GM12878 (cell line): ENCODE measurements at regions of chr5 and their contacts with region 1.

Region 1: GRCh38 chr5:95822542-95823181 is at the start of gene GLRX:
- DNase-seq: no peak
- ATAC-seq: peak; percentile 66
- H3K4me3 ChIP-seq: peak within 1 kb of the TSS; percentile 87
- H3K27ac ChIP-seq: peak within 1 kb of the TSS; percentile 86
- H3K4me1 ChIP-seq: peaks cover 26% of the 10 kb centered on the region
- H3K27me3 ChIP-seq: no peaks in the 10 kb centered on the region
- CTCF ChIP-seq: no peak
- EP300 ChIP-seq: 0 out of 4 replicates have a peak, but pooled peaks of 1 of the 2 experiments have one; percentile 33
- POLR2A ChIP-seq: peak; percentile 69
- RAD21 ChIP-seq: no peak
- polyA plus RNA-seq, gene GLRX: 311 to 366 TPM

Region 2: DNA sequence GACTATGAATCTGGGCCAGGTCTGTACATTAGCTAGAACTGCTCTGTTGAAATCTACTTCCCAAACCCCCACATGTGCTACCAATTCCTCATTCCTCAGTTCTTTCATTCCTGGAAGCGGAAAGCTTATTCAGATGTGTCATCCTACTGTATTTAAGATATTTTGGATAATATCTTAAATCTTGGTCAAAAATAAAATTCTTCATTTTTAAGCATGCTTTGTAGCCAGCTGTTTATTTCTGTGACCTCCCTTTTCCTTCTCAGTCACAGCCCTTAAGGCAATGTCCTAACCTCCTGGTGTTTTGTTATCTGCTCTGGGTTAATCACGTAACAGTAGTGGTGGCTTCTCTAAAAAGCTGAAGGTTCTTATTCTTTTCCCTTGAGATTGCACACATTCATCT is 35.8 kb before region 1 on chr5:
- CTCF ChIA-PET with region 1: interaction called, 102 read pairs
- POLR2A ChIA-PET with region 1: interaction called, 4 read pairs
- RAD21 ChIA-PET with region 1: interaction called, 51 read pairs
- SMC1A ChIA-PET with region 1: interaction called, 62 read pairs
- in situ Hi-C with region 1: no loop called
- intact Hi-C with region 1: no loop called
- DNase-seq: no peak
- ATAC-seq: no peak
- H3K4me3 ChIP-seq: no peak overlapping the region
- H3K27ac ChIP-seq: no peak overlapping the region
- H3K4me1 ChIP-seq: no peaks in the 10 kb centered on the region
- H3K27me3 ChIP-seq: no peaks in the 10 kb centered on the region
- CTCF ChIP-seq: no peak
- EP300 ChIP-seq: no peak
- POLR2A ChIP-seq: no peak
- RAD21 ChIP-seq: no peak

Region 3: DNA sequence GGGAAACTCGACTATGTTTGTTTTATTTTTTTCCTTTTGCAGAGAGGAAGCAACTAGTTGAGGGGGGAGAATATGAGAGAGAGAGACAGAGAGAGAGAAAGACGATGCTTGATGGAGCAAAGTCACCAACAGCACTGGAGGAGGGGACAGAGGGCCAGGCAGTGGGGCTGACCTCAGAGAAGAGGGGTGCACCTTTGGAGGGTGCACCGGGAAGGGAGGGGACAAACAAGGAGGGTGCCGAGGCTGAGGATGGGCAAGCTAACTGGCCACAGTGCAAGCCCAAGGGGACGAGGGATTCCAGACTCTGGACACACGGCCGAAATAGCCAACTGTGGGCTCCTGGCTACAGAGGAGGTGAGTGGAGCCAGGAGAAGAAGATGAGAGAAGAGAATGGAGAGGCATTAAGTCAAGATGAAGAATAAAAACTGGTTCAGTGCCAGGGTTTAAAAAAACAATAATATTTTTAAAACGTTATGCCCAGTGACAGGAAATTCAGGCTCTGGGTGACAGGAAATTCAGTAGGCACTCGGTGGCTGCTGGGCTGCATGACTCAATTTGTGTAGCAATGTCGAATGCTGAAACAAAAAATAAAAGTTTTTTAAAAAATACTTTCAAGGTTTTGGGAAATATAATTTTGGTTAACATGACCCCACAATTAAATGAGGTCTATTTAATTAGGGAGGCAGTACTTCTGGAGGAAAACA is 13.2 kb after region 1 on chr5:
- CTCF ChIA-PET with region 1: interaction called, 145 read pairs
- POLR2A ChIA-PET with region 1: interaction called, 43 read pairs
- RAD21 ChIA-PET with region 1: interaction called, 186 read pairs
- SMC1A ChIA-PET with region 1: interaction called, 320 read pairs
- in situ Hi-C with region 1: no loop called
- intact Hi-C with region 1: loop called (anchors 1 kb)
- DNase-seq: no peak
- ATAC-seq: peak; percentile 45
- H3K4me3 ChIP-seq: peak overlapping the region; percentile 72
- H3K27ac ChIP-seq: peak overlapping the region; percentile 86
- H3K4me1 ChIP-seq: peaks cover 22% of the 10 kb centered on the region
- H3K27me3 ChIP-seq: no peaks in the 10 kb centered on the region
- CTCF ChIP-seq: no peak
- EP300 ChIP-seq: no peak
- POLR2A ChIP-seq: no peak
- RAD21 ChIP-seq: no peak

Region 4: GRCh38 chr5:95915999-95916686 is 93.5 kb after region 1 on chr5:
- CTCF ChIA-PET with region 1: no interaction called
- POLR2A ChIA-PET with region 1: no interaction called
- RAD21 ChIA-PET with region 1: no interaction called
- SMC1A ChIA-PET with region 1: no interaction called
- in situ Hi-C with region 1: no loop called
- intact Hi-C with region 1: no loop called
- DNase-seq: no peak
- ATAC-seq: peak; percentile 79
- H3K4me3 ChIP-seq: no peak overlapping the region
- H3K27ac ChIP-seq: peak overlapping the region; percentile 20; the same call in 1 of the 2 replicates
- H3K4me1 ChIP-seq: peaks cover 38% of the 10 kb centered on the region
- H3K27me3 ChIP-seq: no peaks in the 10 kb centered on the region
- CTCF ChIP-seq: no peak
- EP300 ChIP-seq: no peak
- POLR2A ChIP-seq: no peak
- RAD21 ChIP-seq: no peak